Endothelial cell of umbilical vein (primary cell): ENCODE measurements at regions of chr4 and their contacts with region 1.

Region 1: GRCh38 chr4:124427095-124427767 is 285.3 kb downstream of the ANKRD50 start:
- DNase-seq: peak; percentile 72
- H3K4me3 ChIP-seq: no peak overlapping the region
- H3K27ac ChIP-seq: peak overlapping the region; percentile 100
- H3K4me1 ChIP-seq: peaks cover 68% of the 10 kb centered on the region
- H3K27me3 ChIP-seq: no peaks in the 10 kb centered on the region
- CTCF ChIP-seq: no peak
- POLR2A ChIP-seq: no peak

Region 2: GRCh38 chr4:124097447-124097846 is 329.8 kb before region 1 on chr4:
- CTCF ChIA-PET with region 1: no interaction called
- POLR2A ChIA-PET with region 1: no interaction called
- dilution Hi-C with region 1: no loop called
- intact Hi-C with region 1: no loop called
- DNase-seq: peak; percentile 5
- H3K4me3 ChIP-seq: no peak overlapping the region
- H3K27ac ChIP-seq: no peak overlapping the region
- H3K4me1 ChIP-seq: no peaks in the 10 kb centered on the region
- H3K27me3 ChIP-seq: no peaks in the 10 kb centered on the region
- CTCF ChIP-seq: no peak
- POLR2A ChIP-seq: no peak

Region 3: GRCh38 chr4:124526331-124526730 is 99.1 kb after region 1 on chr4:
- CTCF ChIA-PET with region 1: no interaction called
- POLR2A ChIA-PET with region 1: no interaction called
- dilution Hi-C with region 1: no loop called
- intact Hi-C with region 1: loop called (anchors 2 kb)
- DNase-seq: peak; percentile 83
- H3K4me3 ChIP-seq: no peak overlapping the region
- H3K27ac ChIP-seq: peak overlapping the region; percentile 64
- H3K4me1 ChIP-seq: peaks cover 19% of the 10 kb centered on the region
- H3K27me3 ChIP-seq: no peaks in the 10 kb centered on the region
- CTCF ChIP-seq: no peak
- POLR2A ChIP-seq: no peak

Region 4: DNA sequence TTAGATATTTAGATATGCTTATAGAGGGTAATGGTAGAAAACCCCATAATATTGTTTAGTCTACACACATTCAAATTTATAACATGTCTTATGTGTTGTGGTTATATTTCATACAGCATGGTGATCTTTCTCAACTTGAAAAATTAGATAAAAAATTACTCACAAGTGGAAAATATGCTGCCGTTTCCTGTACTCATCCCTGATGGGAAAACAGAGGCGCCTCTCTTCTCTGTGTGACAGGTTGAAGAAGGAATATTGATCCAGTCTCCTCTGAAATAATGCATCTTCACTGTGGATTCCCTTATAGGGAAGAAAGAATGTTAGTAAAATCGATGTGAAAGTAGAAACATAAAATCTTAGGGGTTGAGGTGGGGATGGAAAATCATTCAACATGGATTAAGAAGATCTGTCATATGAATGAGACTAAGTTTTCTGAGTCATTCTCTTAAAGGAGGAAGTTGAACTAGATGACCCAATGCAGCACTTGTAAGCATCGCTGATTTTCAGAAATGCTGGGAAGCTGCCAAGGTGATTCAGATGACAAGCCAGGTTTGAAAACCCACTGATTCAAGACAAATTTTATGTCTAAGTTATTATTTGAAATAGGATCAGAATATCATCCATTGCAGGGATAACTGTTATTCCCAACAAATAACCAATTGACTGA is 214.6 kb after region 1 on chr4:
- CTCF ChIA-PET with region 1: interaction called, 4 read pairs
- POLR2A ChIA-PET with region 1: no interaction called
- dilution Hi-C with region 1: no loop called
- intact Hi-C with region 1: loop called (anchors 2 kb)
- DNase-seq: peak; percentile 86
- H3K4me3 ChIP-seq: peak overlapping the region in 1 of 3 experiments; percentile 12
- H3K27ac ChIP-seq: peak overlapping the region; percentile 79
- H3K4me1 ChIP-seq: peaks cover 43% of the 10 kb centered on the region
- H3K27me3 ChIP-seq: no peaks in the 10 kb centered on the region
- CTCF ChIP-seq: no peak
- POLR2A ChIP-seq: no peak

Region 5: DNA sequence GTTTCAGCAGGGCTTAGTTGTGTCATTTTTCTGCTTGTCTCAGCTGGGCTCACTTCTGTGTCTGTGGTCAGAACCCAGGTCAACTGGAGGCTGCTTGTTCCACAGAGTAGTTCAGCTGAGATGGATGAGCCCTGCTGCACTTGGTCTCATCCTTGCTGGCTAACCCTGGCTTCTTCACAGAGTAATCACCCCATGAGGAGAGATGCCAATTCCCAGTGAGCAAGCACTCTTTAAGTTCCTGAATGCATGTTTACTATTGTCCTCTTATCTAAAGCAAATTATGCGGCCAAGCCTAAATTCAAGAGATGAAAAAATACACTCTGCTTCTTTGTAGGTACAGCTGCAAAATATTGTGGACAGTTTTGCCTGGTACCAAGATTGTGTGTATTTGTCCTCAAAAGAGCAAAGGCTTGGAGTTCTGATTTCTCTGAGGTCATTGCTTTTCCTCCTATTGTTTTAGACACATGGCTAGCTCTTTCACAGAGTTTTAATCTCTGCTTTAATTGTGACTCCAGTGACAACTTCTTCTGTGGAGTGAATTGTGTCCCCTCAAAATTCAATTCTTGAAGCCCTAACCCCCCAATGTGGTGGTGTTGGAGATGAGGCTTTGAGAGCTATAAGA is 521.9 kb after region 1 on chr4:
- CTCF ChIA-PET with region 1: no interaction called
- POLR2A ChIA-PET with region 1: no interaction called
- dilution Hi-C with region 1: no loop called
- intact Hi-C with region 1: loop called (anchors 2 kb)
- DNase-seq: peak; percentile 80
- H3K4me3 ChIP-seq: no peak overlapping the region
- H3K27ac ChIP-seq: peak overlapping the region; percentile 99
- H3K4me1 ChIP-seq: peaks cover 51% of the 10 kb centered on the region
- H3K27me3 ChIP-seq: no peaks in the 10 kb centered on the region
- CTCF ChIP-seq: no peak
- POLR2A ChIP-seq: no peak

Region 6: DNA sequence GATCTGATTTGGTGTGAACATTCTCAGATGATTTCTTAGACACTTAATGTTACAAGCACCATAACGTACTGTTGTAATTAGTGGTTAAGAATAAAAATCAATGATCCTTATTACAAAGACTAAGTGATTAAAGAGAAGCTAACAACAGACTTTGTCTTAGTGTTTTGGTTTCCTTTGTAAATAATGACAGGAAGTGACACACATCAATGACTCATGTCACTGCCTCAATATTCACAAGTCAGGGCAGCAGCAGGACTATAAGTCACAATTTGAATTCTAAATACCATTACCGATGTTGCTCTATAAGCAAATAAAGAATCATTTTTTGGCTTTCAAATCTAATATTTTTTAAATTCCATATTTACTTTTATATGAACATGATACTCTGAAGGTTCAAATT is 771.7 kb after region 1 on chr4:
- CTCF ChIA-PET with region 1: no interaction called
- POLR2A ChIA-PET with region 1: no interaction called
- dilution Hi-C with region 1: no loop called
- intact Hi-C with region 1: loop called (anchors 1 kb)
- DNase-seq: peak; percentile 84
- H3K4me3 ChIP-seq: no peak overlapping the region
- H3K27ac ChIP-seq: peak overlapping the region; percentile 90
- H3K4me1 ChIP-seq: peaks cover 18% of the 10 kb centered on the region
- H3K27me3 ChIP-seq: no peaks in the 10 kb centered on the region
- CTCF ChIP-seq: no peak
- POLR2A ChIP-seq: no peak